SK-N-SH (cell line): ENCODE measurements at regions of chr21 and their contacts with region 1.

Region 1: GRCh38 chr21:42258153-42258884 is 39.4 kb downstream of the ABCG1 start:
- DNase-seq: peak; percentile 83
- H3K4me3 ChIP-seq: no peak overlapping the region
- H3K27ac ChIP-seq: peak overlapping the region in 1 of 2 experiments; percentile 71; a peak in 1 of 4 replicates
- H3K4me1 ChIP-seq: peaks cover 0 to 45% of the 10 kb centered on the region in 2 experiments; a peak in 1 of 4 replicates
- H3K27me3 ChIP-seq: no peaks in the 10 kb centered on the region
- CTCF ChIP-seq: peak; percentile 62
- EP300 ChIP-seq: no peak
- RAD21 ChIP-seq: peak; percentile 65

Region 2: DNA sequence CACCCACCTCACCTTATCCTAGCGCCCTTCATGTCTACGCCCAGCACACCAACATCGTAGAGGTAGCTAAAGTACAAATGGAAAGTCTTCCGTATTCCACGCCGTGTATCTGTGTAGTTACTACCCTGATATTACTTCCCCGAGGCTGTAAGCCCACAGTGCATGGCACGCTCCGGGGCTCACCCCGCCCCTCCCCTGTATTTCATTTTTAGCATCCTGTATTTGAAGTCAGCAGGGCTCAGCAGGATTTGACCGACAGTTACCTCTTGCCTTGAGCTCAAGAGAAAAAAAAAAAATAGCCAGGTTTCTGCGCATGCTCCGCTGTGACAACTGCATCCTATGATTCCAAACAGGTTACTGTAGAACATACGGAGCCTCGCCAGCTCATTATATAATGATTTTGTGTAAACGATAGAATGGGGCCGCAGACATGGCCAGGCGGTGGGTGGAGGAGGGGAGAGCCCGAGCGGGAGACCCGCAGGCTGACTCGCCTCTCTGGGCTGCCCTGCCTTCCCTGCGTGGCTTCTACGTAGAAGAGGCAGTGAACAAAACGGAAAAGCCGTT is 38.1 kb before region 1 on chr21:
- CTCF ChIA-PET with region 1: interaction called, 10 read pairs
- POLR2A ChIA-PET with region 1: interaction called, 3 read pairs
- DNase-seq: peak; percentile 79
- H3K4me3 ChIP-seq: peak overlapping the region; percentile 55 to 58; a peak in 3 of 4 replicates
- H3K27ac ChIP-seq: peak overlapping the region in 1 of 2 experiments; percentile 79; a peak in 2 of 4 replicates
- H3K4me1 ChIP-seq: peaks cover 0 to 34% of the 10 kb centered on the region in 2 experiments; a peak in 2 of 4 replicates
- H3K27me3 ChIP-seq: peaks cover 11% of the 10 kb centered on the region; the same call in 1 of the 2 replicates
- CTCF ChIP-seq: no peak
- EP300 ChIP-seq: no peak
- RAD21 ChIP-seq: no peak

Region 3: DNA sequence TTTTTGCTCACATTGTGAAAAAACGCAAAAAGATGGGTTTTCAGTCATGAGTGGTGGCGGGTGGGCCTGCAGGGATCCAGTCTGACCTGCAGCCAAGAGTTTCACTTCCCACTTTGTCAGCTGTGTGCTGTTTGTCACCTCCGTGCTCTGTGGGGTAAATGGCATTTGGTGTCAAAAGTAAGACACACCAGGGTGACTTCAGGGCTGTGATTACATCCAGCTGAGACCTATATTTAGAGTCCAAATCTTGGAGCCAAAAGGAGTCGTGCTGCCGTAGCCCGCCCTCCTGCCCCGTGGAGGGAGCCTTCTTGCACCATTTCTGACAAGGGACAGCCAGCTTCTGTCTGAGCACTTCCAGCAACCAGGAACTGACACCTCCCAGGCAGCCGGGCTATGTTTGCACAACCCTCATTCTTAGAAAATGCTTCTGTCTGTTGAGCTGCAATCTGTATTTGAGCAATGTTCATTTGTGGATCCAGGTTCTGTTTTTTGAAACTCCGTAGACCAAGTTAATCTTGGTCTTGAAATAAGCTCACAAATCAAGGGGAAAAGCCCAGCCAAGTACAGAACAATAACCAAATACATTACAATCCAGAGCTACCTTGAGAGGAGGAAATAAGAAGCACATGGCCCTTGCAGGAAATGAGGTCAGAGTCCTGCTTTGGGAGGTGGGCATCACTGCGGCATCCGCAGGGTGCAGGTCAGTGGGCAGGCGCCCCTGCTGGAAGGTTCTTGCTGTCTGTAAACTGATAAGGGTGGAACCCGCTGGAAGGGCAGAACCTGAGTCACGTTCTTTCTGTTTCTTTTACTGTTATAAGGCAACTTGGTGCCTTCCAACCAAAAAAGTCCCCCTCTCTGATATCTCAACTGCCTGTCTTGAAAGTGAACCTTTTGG is 25.0 kb before region 1 on chr21:
- CTCF ChIA-PET with region 1: interaction called, 28 read pairs
- POLR2A ChIA-PET with region 1: interaction called, 7 read pairs
- DNase-seq: peak; percentile 66
- H3K4me3 ChIP-seq: no peak overlapping the region
- H3K27ac ChIP-seq: peak overlapping the region in 1 of 2 experiments; percentile 89; a peak in 2 of 4 replicates
- H3K4me1 ChIP-seq: peaks cover 8 to 48% of the 10 kb centered on the region in 2 experiments; a peak in 3 of 4 replicates
- H3K27me3 ChIP-seq: peaks cover 6% of the 10 kb centered on the region; the same call in 1 of the 2 replicates
- CTCF ChIP-seq: no peak
- EP300 ChIP-seq: no peak
- RAD21 ChIP-seq: no peak

Region 4: DNA sequence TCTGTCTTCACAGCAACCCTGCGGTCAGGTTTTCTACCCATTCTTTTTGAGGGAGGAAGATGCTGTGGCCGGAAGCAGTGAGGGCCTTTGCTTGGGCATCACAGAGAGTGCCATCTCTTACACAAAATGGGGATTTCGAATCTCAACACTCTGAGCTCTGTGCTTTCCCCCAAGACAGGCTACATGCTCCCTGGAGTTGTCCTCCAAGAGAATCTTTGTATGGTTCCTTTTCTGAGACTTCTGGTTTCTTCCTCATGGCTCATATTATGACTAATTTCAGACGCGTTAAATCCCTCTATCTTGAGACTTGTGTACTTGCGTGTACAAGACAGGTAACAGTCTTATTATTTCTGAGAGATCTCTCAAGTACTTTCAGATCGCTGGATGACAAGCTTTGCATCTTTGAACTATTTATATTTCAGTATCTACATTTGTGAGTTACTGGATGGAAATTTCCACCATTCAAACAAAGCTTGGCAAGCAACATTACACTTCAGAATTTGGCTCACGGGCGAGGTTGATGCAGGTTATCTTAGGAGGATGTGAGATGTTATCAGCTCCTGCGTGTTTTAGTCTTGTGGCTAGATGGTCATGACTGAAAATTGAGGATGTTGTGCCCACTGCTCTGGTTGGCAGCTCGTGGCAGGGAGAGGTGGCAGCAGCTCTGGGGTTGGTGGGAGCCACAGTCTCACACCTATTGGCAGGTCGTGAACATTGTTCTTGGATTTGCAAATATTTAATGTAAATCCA is 20.0 kb before region 1 on chr21:
- CTCF ChIA-PET with region 1: interaction called, 28 read pairs
- POLR2A ChIA-PET with region 1: interaction called, 7 read pairs
- DNase-seq: no peak
- H3K4me3 ChIP-seq: no peak overlapping the region
- H3K27ac ChIP-seq: no peak overlapping the region
- H3K4me1 ChIP-seq: peaks cover 8 to 44% of the 10 kb centered on the region in 2 experiments; a peak in 3 of 4 replicates
- H3K27me3 ChIP-seq: peaks cover 6% of the 10 kb centered on the region; the same call in 1 of the 2 replicates
- CTCF ChIP-seq: no peak
- EP300 ChIP-seq: no peak
- RAD21 ChIP-seq: no peak

Region 5: DNA sequence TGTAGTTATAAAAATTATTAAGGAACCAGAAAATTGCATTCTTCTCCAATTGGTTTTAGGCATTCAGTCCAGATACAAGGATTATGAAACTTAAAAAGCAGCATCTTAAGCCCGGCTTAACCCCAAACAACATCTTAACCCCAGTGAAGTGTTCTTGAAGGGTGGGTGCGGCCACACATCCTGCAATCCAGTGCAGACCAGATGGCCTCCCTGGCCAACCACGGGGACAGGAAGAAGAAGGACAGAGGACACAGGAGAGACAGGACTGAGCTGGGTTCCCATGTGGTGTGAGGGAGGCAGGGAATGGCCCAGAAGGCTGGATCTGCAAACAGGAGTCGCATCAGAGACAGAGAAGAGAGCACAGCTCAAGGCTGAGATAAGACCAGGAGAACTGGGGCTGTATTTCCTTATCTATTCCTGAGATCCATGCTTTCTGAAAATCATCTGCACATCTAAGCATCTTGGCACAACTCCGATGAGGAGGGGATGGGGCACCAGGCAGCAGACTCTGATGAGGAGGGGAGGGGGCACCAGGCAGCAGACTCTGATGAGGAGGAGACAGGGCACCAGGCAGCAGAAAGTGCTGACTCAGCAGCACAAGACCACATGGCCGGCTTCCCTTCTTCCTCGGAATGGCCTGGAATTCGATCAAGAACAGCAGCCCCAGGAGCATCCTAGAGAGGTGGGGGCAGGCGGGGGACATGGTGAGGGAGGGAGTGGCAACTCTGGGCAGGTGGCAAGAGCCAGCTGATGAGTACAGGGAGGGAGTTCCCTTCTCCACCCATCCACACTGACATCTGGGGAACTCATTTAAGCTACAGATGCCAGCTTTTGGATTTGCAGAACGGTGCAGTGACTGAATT is 12.8 kb before region 1 on chr21:
- CTCF ChIA-PET with region 1: interaction called, 21 read pairs
- POLR2A ChIA-PET with region 1: no interaction called
- DNase-seq: peak; percentile 62
- H3K4me3 ChIP-seq: no peak overlapping the region
- H3K27ac ChIP-seq: peak overlapping the region in 1 of 2 experiments; percentile 29; a peak in 1 of 4 replicates
- H3K4me1 ChIP-seq: peaks cover 0 to 18% of the 10 kb centered on the region in 2 experiments; a peak in 2 of 4 replicates
- H3K27me3 ChIP-seq: no peaks in the 10 kb centered on the region
- CTCF ChIP-seq: no peak
- EP300 ChIP-seq: no peak
- RAD21 ChIP-seq: no peak

Region 6: DNA sequence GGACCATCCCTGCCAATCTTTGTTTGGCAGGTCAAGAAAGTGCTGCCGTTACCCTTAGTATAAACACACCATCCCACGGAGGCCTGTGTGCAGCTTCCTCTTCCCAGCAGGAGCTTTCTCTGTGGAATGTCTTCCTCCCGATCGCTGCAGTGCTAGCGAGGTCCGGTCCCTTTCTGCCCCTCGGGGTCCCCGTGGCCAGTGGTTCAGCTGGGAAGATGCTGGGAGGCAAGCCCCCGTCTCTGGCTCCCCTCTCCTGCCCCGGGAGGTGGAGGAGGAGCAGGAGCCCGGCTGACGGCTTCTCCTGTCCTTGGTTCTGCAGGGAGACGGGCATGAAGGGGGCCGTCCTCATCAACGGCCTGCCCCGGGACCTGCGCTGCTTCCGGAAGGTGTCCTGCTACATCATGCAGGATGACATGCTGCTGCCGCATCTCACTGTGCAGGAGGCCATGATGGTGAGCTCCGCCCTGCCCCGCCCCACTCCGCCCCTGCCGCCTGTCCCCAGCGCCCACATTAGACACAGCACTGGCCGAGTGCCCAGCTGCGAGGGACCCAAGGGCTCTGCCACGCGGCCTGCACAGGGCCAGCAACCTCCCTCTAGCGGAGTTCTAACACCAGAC is 14.8 kb after region 1 on chr21:
- CTCF ChIA-PET with region 1: interaction called, 15 read pairs
- POLR2A ChIA-PET with region 1: no interaction called
- DNase-seq: no peak
- H3K4me3 ChIP-seq: no peak overlapping the region
- H3K27ac ChIP-seq: no peak overlapping the region
- H3K4me1 ChIP-seq: no peaks in the 10 kb centered on the region; a peak in 1 of 4 replicates
- H3K27me3 ChIP-seq: no peaks in the 10 kb centered on the region
- CTCF ChIP-seq: no peak
- EP300 ChIP-seq: no peak
- RAD21 ChIP-seq: no peak